Brain microvascular endothelial cell (primary cell): ENCODE measurements at regions of chr5 and their contacts with region 1.

Region 1: GRCh38 chr5:56270568-56271392 is 37.6 kb upstream of the ANKRD55 start:
- DNase-seq: peak; percentile 82
- H3K4me3 ChIP-seq: no peak overlapping the region
- H3K27ac ChIP-seq: no peak overlapping the region
- H3K27me3 ChIP-seq: no peaks in the 10 kb centered on the region
- CTCF ChIP-seq: peak; percentile 100

Region 2: GRCh38 chr5:56838409-56839039 is 567.7 kb after region 1 on chr5:
- in situ Hi-C with region 1: loop called (anchors 25 kb)
- DNase-seq: no peak
- H3K4me3 ChIP-seq: no peak overlapping the region
- H3K27ac ChIP-seq: peak overlapping the region; percentile 21
- H3K27me3 ChIP-seq: no peaks in the 10 kb centered on the region
- CTCF ChIP-seq: peak; percentile 53